ENCODE measurements at regions of chr2 and their contacts with region 1.

Region 1: GRCh38 chr2:177263451-177264208 is 897 bp downstream of the NFE2L2 start:
- DNase-seq: peak; percentile 44 to 88
- H3K4me3 ChIP-seq: peak overlapping the region; percentile 71 to 82 (median 78)
- H3K27ac ChIP-seq: peak overlapping the region; percentile 78; the same call in 1 of the 2 replicates
- H3K4me1 ChIP-seq: peaks cover 0 to 2% (median 2%) of the 10 kb centered on the region in 4 experiments; a peak in 3 of 7 replicates
- H3K27me3 ChIP-seq: no peaks in the 10 kb centered on the region
- CTCF ChIP-seq: peak; percentile 47 to 57 (median 50); a peak in 3 of 4 replicates
- EP300 ChIP-seq: no peak; a peak in 1 of 3 replicates
- POLR2A ChIP-seq: peak; percentile 34 to 73
- RAD21 ChIP-seq: peak; percentile 31 to 55

Region 2: DNA sequence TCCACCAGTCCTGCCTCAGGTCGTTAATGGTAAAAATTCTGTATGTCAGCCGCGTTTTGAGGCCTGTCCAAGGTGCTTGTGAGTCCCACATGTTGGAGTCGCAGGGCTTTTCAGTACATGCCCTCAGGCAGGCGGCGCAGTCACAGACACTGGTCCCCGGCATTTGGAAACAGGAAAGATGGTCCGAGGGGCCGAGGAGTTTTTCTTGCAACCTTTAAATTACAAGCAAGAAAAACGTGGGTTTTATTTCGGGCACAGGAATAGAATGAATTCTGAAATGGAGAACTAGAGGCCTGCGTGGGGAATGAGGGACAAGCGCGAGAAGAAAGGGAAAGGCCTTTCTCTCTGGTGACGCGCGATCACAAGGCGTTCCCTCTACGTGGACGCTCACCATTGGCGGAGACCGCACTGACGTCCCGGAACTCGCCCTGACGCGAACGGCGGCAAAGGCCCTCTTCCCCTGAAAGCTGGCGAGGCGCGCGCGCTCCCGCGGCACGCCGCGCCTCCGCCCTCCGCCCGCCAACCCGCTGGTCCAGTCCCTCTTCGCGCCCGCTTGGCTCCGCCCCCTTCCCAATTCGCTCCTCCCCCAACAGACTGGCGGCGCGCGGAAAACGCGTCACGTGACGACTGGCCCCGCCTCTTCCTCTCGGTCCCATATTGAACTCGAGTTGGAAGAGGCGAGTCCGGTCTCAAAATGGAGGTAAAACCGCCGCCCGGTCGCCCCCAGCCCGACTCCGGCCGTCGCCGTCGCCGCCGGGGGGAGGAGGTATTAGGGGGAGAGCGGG is 51.3 kb before region 1 on chr2 and contains the start of gene HNRNPA3:
- CTCF ChIA-PET with region 1: no interaction called
- POLR2A ChIA-PET with region 1: interaction called, 27 read pairs
- DNase-seq: peak; percentile 98 to 100
- H3K4me3 ChIP-seq: peak within 1 kb of the TSS; percentile 73 to 91 (median 79)
- H3K27ac ChIP-seq: peak within 1 kb of the TSS; percentile 99
- H3K4me1 ChIP-seq: peaks cover 2 to 5% (median 4%) of the 10 kb centered on the region in 4 experiments; a peak in 5 of 7 replicates
- H3K27me3 ChIP-seq: no peaks in the 10 kb centered on the region
- CTCF ChIP-seq: no peak
- EP300 ChIP-seq: no peak; a peak in 1 of 3 replicates
- POLR2A ChIP-seq: peak; percentile 70 to 97
- RAD21 ChIP-seq: no peak
- total RNA-seq, gene HNRNPA3: 390 and 408 TPM in 2 replicates

Region 3: GRCh38 chr2:177229448-177230242 is 34.0 kb before region 1 on chr2:
- CTCF ChIA-PET with region 1: no interaction called
- POLR2A ChIA-PET with region 1: interaction called, 55 read pairs
- DNase-seq: no peak
- H3K4me3 ChIP-seq: no peak overlapping the region
- H3K27ac ChIP-seq: no peak overlapping the region
- H3K4me1 ChIP-seq: no peaks in the 10 kb centered on the region
- H3K27me3 ChIP-seq: no peaks in the 10 kb centered on the region
- CTCF ChIP-seq: no peak
- EP300 ChIP-seq: no peak
- POLR2A ChIP-seq: no peak
- RAD21 ChIP-seq: no peak

Region 4: GRCh38 chr2:177281400-177282180 is 18.0 kb after region 1 on chr2:
- CTCF ChIA-PET with region 1: interaction called, 22 read pairs
- POLR2A ChIA-PET with region 1: interaction called, 28 read pairs
- DNase-seq: no peak
- H3K4me3 ChIP-seq: no peak overlapping the region; a peak in 1 of 8 replicates
- H3K27ac ChIP-seq: no peak overlapping the region
- H3K4me1 ChIP-seq: no peaks in the 10 kb centered on the region
- H3K27me3 ChIP-seq: no peaks in the 10 kb centered on the region
- CTCF ChIP-seq: no peak
- EP300 ChIP-seq: no peak
- POLR2A ChIP-seq: no peak
- RAD21 ChIP-seq: no peak

Region 5: GRCh38 chr2:177392373-177393202 is 129.0 kb after region 1 on chr2 and contains the start of gene AGPS:
- CTCF ChIA-PET with region 1: no interaction called
- POLR2A ChIA-PET with region 1: interaction called, 10 read pairs
- DNase-seq: peak; percentile 41 to 84
- H3K4me3 ChIP-seq: peak within 1 kb of the TSS; percentile 85 to 90 (median 87)
- H3K27ac ChIP-seq: peak within 1 kb of the TSS; percentile 51; the same call in 1 of the 2 replicates
- H3K4me1 ChIP-seq: peaks cover 0 to 2% (median 0%) of the 10 kb centered on the region in 4 experiments; a peak in 1 of 7 replicates
- H3K27me3 ChIP-seq: no peaks in the 10 kb centered on the region
- CTCF ChIP-seq: 0 out of 4 replicates have a peak, but pooled peaks of 1 of the 3 experiments have one; percentile 8
- EP300 ChIP-seq: peak in 1 of 2 experiments; percentile 37; a peak in 1 of 3 replicates
- POLR2A ChIP-seq: peak; percentile 27 to 83
- RAD21 ChIP-seq: peak in 1 of 2 experiments; percentile 1; a peak in 1 of 4 replicates
- total RNA-seq, gene AGPS: 57.8 and 60.0 TPM in 2 replicates

Measured in H1 (cell line).